Calu3 (cell line): ENCODE measurements at regions of chr9 and their contacts with region 1.

Region 1: DNA sequence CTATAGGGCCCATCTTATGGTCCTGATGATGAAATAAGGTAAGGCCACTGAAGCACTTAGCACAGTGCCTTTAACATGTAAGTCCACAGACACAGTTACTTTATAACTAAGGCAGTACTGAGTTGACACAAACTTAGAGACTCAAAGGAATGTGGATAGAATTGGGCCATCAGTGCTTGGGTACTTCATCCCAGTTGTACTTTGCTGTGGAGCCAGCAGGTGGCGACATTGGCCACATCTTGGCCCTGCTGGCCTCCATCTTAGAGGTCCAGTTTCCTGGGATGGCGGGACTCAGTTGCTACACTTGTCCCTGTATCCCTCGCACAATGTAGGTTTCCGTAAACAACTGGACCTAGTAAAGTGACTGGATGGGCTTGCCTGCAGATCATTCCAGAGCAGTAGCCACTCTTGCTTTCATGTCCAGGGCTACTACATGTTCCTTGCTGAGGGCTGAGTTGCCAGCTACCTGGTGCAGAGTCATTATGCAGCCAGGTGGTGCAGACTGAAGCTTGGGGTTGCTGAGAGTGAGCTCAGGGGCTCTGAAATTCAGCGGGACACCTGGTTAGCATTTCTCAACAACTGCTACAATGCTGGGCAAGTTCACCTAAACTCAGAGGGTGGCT is 10.6 kb downstream of the MTAP start:
- DNase-seq: peak; percentile 77
- H3K4me3 Mint-ChIP-seq: no peak overlapping the region
- H3K27ac Mint-ChIP-seq: peak overlapping the region; percentile 23
- H3K4me1 Mint-ChIP-seq: peaks cover 41% of the 10 kb centered on the region
- H3K27me3 Mint-ChIP-seq: no peaks in the 10 kb centered on the region
- CTCF ChIP-seq: peak; percentile 72

Region 2: GRCh38 chr9:21873540-21874221 is 60.6 kb after region 1 on chr9:
- CTCF ChIA-PET with region 1: no interaction called
- intact Hi-C with region 1: no loop called
- DNase-seq: no peak
- H3K4me3 Mint-ChIP-seq: no peak overlapping the region
- H3K27ac Mint-ChIP-seq: peak overlapping the region; percentile 50
- H3K4me1 Mint-ChIP-seq: peaks cover 27% of the 10 kb centered on the region
- H3K27me3 Mint-ChIP-seq: no peaks in the 10 kb centered on the region
- CTCF ChIP-seq: no peak

Region 3: GRCh38 chr9:21995177-21996086 is 182.4 kb after region 1 on chr9:
- CTCF ChIA-PET with region 1: interaction called, 3 read pairs
- intact Hi-C with region 1: loop called (anchors 1 kb)
- DNase-seq: peak; percentile 72
- H3K4me3 Mint-ChIP-seq: peak overlapping the region; percentile 94
- H3K27ac Mint-ChIP-seq: peak overlapping the region; percentile 97
- H3K4me1 Mint-ChIP-seq: peaks cover 17% of the 10 kb centered on the region
- H3K27me3 Mint-ChIP-seq: no peaks in the 10 kb centered on the region
- CTCF ChIP-seq: no peak

Region 4: DNA sequence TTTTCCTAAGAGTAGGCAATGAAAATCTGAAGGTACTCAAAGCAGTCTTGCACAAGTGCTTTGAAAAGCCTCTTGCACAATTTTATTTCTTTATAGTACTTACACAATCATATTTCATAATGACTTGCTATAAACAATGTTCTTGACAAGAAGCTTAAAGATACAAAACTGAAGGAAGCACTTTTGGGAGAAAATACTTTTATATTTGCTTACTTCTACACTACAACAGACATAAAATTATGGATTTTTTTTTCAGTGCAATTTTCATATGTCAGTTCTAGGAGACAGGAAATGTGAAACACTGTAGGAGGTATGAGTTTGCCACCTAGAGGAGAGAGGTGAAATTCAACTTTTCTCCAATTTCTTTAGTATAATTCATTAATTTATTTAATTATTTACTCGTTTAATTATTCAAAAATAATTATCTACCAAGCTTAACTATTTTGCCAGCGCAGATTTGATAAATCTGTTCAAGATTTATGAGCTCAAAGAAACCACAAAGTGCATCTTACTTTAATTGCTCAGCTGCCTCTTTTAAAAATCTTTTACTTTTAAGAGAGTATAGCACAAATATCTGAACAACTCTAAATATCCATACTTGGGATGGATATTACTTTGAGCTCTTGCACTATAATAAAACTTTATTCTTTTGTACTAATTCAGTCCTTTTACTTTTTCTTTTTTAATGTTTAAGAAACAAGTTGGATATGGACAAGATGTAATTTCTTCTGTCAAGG is 225.1 kb after region 1 on chr9:
- CTCF ChIA-PET with region 1: no interaction called
- intact Hi-C with region 1: loop called (anchors 5 kb)
- DNase-seq: no peak
- H3K4me3 Mint-ChIP-seq: no peak overlapping the region
- H3K27ac Mint-ChIP-seq: no peak overlapping the region
- H3K4me1 Mint-ChIP-seq: peaks cover 26% of the 10 kb centered on the region
- H3K27me3 Mint-ChIP-seq: no peaks in the 10 kb centered on the region
- CTCF ChIP-seq: peak; percentile 32

Region 5: DNA sequence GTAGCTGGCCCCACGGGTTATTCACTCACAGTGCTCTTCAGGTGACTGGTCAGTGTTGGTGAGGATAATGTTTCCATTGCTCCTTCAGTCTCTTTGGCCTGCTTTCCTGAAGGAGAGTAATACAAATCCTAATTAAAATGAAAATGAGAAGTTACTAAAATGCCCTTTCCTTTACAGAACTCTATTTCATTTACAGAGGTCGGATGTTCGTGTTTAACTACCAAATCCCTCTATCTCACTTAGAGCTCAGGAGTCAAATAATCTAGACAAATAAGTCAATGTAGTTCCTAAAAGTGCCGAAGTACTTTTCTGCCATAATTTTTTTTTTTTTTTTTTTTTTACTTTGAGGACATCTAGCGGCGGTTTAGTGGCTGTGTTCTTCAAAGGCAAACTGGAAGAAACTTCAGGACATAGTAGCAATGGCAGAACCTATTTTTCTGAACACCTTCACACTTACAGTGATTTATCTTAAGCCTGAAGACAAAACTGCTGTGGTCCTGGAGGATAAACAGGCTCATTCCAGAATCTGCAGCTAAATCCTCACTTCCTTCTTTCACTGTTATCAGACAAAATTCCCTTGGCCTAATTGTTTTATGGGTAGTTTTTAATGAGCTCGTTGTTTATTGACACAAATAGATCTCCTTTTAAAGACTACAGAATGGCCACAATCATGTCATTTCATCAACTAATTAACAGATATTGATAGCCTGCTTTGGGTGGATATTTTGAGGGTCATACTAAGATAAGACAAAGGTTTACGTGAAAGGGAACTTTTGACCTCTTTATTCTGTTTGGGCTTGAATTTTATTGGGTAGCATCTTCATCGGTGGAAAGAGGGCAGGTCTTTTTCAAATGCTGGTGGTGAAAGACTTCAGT is 426.0 kb after region 1 on chr9:
- CTCF ChIA-PET with region 1: interaction called, 12 read pairs
- intact Hi-C with region 1: loop called (anchors 1 kb)
- DNase-seq: no peak
- H3K4me3 Mint-ChIP-seq: peak overlapping the region; percentile 59
- H3K27ac Mint-ChIP-seq: peak overlapping the region; percentile 84
- H3K4me1 Mint-ChIP-seq: peaks cover 79% of the 10 kb centered on the region
- H3K27me3 Mint-ChIP-seq: no peaks in the 10 kb centered on the region
- CTCF ChIP-seq: no peak

Region 6: GRCh38 chr9:22307013-22307711 is 494.1 kb after region 1 on chr9:
- CTCF ChIA-PET with region 1: no interaction called
- intact Hi-C with region 1: loop called (anchors 5 kb)
- DNase-seq: peak; percentile 55
- H3K4me3 Mint-ChIP-seq: peak overlapping the region; percentile 9
- H3K27ac Mint-ChIP-seq: peak overlapping the region; percentile 25
- H3K4me1 Mint-ChIP-seq: peaks cover 46% of the 10 kb centered on the region
- H3K27me3 Mint-ChIP-seq: no peaks in the 10 kb centered on the region
- CTCF ChIP-seq: peak; percentile 36